GM12878 (cell line): ENCODE measurements at regions of chr3 and their contacts with region 1.

Region 1: GRCh38 chr3:124207873-124208485 is 216.1 kb upstream of the ROPN1 start:
- DNase-seq: peak; percentile 91
- ATAC-seq: peak; percentile 98
- H3K4me3 ChIP-seq: no peak overlapping the region
- H3K27ac ChIP-seq: peak overlapping the region; percentile 75
- H3K4me1 ChIP-seq: peaks cover 32% of the 10 kb centered on the region
- H3K27me3 ChIP-seq: no peaks in the 10 kb centered on the region
- CTCF ChIP-seq: no peak
- EP300 ChIP-seq: peak; percentile 52 to 74; a peak in 2 of 4 replicates
- POLR2A ChIP-seq: no peak
- RAD21 ChIP-seq: no peak

Region 2: DNA sequence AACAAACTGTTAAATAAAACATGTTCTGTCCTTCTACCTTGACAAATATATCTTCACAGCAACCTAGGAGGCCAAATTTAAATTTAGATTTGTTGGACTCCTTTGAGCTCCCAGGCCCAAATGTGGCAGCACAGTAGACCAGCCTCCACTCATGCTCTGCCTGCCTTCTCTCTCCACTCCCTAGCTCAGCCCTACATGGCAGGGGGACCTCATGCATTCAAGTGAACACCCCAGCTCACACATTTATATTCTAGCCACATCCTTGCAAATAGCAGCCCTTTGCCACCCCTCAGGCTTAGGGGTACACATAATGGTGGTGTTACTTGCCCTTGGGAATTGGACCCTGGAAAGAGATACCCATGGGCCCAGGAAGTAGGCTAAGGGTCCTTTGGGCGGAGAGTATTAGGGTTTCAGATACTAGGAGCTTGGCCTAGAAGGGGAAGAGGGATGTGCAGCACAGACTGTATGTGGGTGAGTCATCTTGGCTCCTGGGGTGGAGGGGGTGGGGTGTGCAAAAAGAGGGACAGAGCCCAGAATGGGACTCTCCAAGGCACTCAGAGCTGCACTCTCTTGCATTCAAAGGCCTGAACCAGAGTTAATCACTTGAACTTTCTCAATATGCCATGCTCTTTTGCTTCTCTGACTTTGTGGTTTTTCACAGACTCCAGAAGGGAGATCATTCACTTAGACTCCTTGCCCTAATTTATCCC is 52.4 kb after region 1 on chr3:
- CTCF ChIA-PET with region 1: interaction called, 3 read pairs
- POLR2A ChIA-PET with region 1: interaction called, 6 read pairs
- RAD21 ChIA-PET with region 1: interaction called, 10 read pairs
- SMC1A ChIA-PET with region 1: interaction called, 17 read pairs
- in situ Hi-C with region 1: no loop called
- intact Hi-C with region 1: no loop called
- DNase-seq: no peak
- ATAC-seq: peak; percentile 71
- H3K4me3 ChIP-seq: no peak overlapping the region
- H3K27ac ChIP-seq: no peak overlapping the region
- H3K4me1 ChIP-seq: no peaks in the 10 kb centered on the region; the same call in 1 of the 2 replicates
- H3K27me3 ChIP-seq: no peaks in the 10 kb centered on the region
- CTCF ChIP-seq: no peak
- EP300 ChIP-seq: no peak
- POLR2A ChIP-seq: no peak
- RAD21 ChIP-seq: no peak